Dorsolateral prefrontal cortex (tissue), 120 donors: ENCODE measurements at regions of chr7 and their contacts with region 1.

Region 1: GRCh38 chr7:96321658-96322372 is at the start of gene SLC25A13:
- DNase-seq: peak; percentile 84 to 96 (median 92)
- H3K4me3 ChIP-seq: peak within 1 kb of the TSS; percentile 68 to 99 (median 93)
- H3K27ac ChIP-seq: peak within 1 kb of the TSS; percentile 66 to 99 (median 96)
- H3K27me3 ChIP-seq: no peaks in the 10 kb centered on the region
- CTCF ChIP-seq: peak in 22 of 56 donors; percentile 10 to 44 (median 29)
- total RNA-seq, gene SLC25A13: 8.6 to 61.9 (median 21.0) TPM

Region 2: GRCh38 chr7:96034940-96035727 is 286.7 kb before region 1 on chr7:
- intact Hi-C with region 1: no loop called
- DNase-seq: peak in 1 of 10 donors; percentile 43
- H3K4me3 ChIP-seq: no peak overlapping the region
- H3K27ac ChIP-seq: no peak overlapping the region
- H3K27me3 ChIP-seq: no peaks in the 10 kb centered on the region
- CTCF ChIP-seq: no peak

Region 3: DNA sequence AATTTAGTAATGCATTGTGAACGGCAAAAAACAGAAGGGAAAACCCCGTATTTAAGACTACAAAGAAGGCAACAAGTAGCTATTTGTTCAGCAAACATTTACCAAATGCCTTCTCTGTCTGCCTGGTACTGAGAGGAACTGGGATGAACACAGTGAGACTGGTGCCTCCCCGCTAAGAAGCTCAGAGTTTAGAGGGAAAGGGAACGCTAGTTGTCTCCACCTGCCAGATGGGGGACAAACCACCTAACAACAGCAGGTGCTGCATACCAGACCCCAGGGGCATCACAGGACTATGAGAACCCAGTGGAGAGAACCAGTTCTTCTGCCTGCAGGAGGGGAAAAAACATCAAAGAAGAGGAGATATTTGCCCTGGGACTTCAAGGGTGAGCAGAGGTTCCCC is 147.0 kb before region 1 on chr7:
- intact Hi-C with region 1: loop called (anchors 5 to 10 kb)
- DNase-seq: no peak
- H3K4me3 ChIP-seq: no peak overlapping the region
- H3K27ac ChIP-seq: peak overlapping the region in 54 of 59 donors; percentile 2 to 91 (median 76)
- H3K27me3 ChIP-seq: no peaks in the 10 kb centered on the region
- CTCF ChIP-seq: no peak

Region 4: GRCh38 chr7:96188174-96188581 is 133.6 kb before region 1 on chr7:
- intact Hi-C with region 1: loop called in 1 of 2 experiments (anchors 10 kb)
- DNase-seq: no peak
- H3K4me3 ChIP-seq: peak overlapping the region in 53 of 59 donors; percentile 0 to 57 (median 27)
- H3K27ac ChIP-seq: peak overlapping the region in 20 of 59 donors; percentile 14 to 72 (median 56)
- H3K27me3 ChIP-seq: no peaks in the 10 kb centered on the region
- CTCF ChIP-seq: no peak

Region 5: GRCh38 chr7:96297876-96298275 is 23.9 kb before region 1 on chr7:
- intact Hi-C with region 1: loop called (anchors 1 kb)
- DNase-seq: peak in 8 of 10 donors; percentile 56 to 81 (median 67)
- H3K4me3 ChIP-seq: peak overlapping the region in 2 of 59 donors; percentile 2 to 27
- H3K27ac ChIP-seq: peak overlapping the region; percentile 60 to 99 (median 94)
- H3K27me3 ChIP-seq: no peaks in the 10 kb centered on the region
- CTCF ChIP-seq: peak in 1 of 56 donors; percentile 10

Region 6: DNA sequence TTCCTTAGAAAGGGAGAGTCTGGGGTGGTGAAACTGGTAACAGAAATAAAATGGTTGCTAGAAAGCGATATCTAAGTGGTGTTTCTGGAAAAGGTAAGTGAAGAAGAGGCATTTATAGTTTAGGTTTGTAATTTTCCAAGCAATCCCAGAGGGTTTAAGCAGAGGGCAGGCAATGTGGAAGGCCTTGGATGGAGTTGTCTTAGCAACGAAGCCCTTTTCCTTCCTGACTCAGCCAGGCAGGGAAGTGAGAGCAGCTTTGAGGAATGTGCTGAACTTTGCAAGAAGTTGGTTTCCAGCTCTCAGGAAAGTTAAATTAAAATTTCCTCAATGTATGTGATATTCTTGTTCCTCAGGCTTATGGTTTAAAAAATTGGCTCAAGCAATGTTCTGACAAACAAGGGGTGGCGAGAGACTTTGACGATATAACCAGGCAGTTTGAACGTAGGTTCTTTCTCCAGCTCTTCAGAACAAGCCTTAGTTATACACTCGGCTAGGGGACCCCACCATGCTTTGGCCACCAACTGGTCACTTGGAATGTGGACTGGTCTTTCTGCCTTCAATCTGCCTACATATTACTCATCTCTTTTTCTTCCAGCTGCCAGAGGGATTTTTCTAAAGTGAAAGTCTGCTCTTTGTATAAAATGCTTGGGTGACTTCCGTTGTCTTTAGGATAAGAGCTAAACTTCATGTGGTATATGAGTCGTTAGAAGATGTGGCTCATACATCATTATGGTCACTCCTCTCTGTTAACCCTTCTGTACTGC is 67.0 kb after region 1 on chr7:
- intact Hi-C with region 1: no loop called
- DNase-seq: no peak
- H3K4me3 ChIP-seq: no peak overlapping the region
- H3K27ac ChIP-seq: no peak overlapping the region
- H3K27me3 ChIP-seq: no peaks in the 10 kb centered on the region
- CTCF ChIP-seq: no peak